Panc1 (cell line): ENCODE measurements at regions of chr17 and their contacts with region 1.

Region 1: GRCh38 chr17:51000835-51001638 is 119.6 kb downstream of the SPAG9 start:
- DNase-seq: peak; percentile 42
- ATAC-seq: peak; percentile 82
- H3K4me3 ChIP-seq: no peak overlapping the region
- H3K27ac ChIP-seq: no peak overlapping the region
- H3K4me1 ChIP-seq: no peaks in the 10 kb centered on the region
- H3K27me3 ChIP-seq: no peaks in the 10 kb centered on the region
- CTCF ChIP-seq: peak; percentile 61; the same call in 1 of the 2 replicates

Region 2: GRCh38 chr17:49180303-49180702 is 1820.7 kb before region 1 on chr17:
- CTCF ChIA-PET with region 1: interaction called, 11 read pairs
- POLR2A ChIA-PET with region 1: no interaction called
- in situ Hi-C with region 1: no loop called
- intact Hi-C with region 1: no loop called
- DNase-seq: peak; percentile 28
- ATAC-seq: peak; percentile 83
- H3K4me3 ChIP-seq: no peak overlapping the region
- H3K27ac ChIP-seq: no peak overlapping the region
- H3K4me1 ChIP-seq: no peaks in the 10 kb centered on the region; the same call in 1 of the 2 replicates
- H3K27me3 ChIP-seq: no peaks in the 10 kb centered on the region
- CTCF ChIP-seq: peak; percentile 99

Region 3: GRCh38 chr17:51056813-51057510 is 55.9 kb after region 1 on chr17:
- CTCF ChIA-PET with region 1: interaction called, 3 read pairs
- POLR2A ChIA-PET with region 1: no interaction called
- in situ Hi-C with region 1: no loop called
- intact Hi-C with region 1: loop called (anchors 5 kb)
- DNase-seq: no peak
- ATAC-seq: peak; percentile 81
- H3K4me3 ChIP-seq: no peak overlapping the region
- H3K27ac ChIP-seq: peak overlapping the region; percentile 30; the same call in 1 of the 2 replicates
- H3K4me1 ChIP-seq: peaks cover 11% of the 10 kb centered on the region
- H3K27me3 ChIP-seq: no peaks in the 10 kb centered on the region
- CTCF ChIP-seq: peak; percentile 74; the same call in 1 of the 2 replicates